Mammary epithelial cell (primary cell): ENCODE measurements at regions of chr2 and their contacts with region 1.

Region 1: GRCh38 chr2:210399440-210400041 is 77.0 kb downstream of the LANCL1 start:
- DNase-seq: peak; percentile 11
- H3K4me3 ChIP-seq: no peak overlapping the region
- H3K27ac ChIP-seq: no peak overlapping the region
- H3K4me1 ChIP-seq: no peaks in the 10 kb centered on the region
- H3K27me3 ChIP-seq: no peaks in the 10 kb centered on the region
- CTCF ChIP-seq: peak; percentile 36 to 48

Region 2: DNA sequence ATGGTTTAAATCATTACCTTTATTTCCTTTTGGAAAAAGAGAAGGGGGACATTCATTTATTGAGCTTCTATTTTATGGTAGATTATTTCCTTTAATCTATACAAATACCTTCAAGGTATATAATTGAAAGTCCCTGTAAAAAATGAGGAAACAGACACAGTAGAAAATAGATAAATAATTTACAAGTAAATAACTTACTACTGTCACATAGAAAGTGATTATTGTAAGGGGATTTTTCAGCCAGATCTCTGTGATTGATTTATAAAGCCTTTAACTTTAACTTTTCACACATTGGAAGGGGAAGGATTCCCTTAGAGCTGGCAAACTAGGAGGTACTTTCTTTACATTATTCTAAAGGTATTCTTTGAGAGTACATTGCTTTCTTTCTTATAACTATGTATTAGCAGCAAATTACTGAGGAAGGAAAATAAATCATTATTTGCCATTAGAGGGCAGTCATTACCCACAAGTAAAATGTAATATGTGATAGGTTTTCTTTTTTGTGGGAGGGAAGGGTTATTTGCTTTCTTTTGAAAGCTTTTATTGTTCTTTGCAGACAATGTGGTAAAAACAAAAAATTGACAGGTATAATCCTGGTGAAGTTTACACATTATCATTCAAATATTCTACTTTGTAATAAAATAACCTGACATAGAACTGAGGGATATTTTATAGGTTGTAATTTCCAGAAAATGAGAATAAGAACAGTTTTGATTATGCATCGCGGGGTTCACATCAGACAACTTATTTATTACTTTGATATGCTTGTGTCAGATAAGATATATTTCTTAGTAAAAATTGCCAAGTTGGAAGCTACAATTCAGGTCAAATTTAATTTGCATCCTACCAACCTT is 421.9 kb before region 1 on chr2:
- CTCF ChIA-PET with region 1: no interaction called
- dilution Hi-C with region 1: no loop called
- in situ Hi-C with region 1: loop called (anchors 25 kb)
- intact Hi-C with region 1: loop called (anchors 5 kb)
- DNase-seq: peak; percentile 9
- H3K4me3 ChIP-seq: no peak overlapping the region
- H3K27ac ChIP-seq: no peak overlapping the region
- H3K4me1 ChIP-seq: no peaks in the 10 kb centered on the region
- H3K27me3 ChIP-seq: no peaks in the 10 kb centered on the region
- CTCF ChIP-seq: peak; percentile 38 to 51

Region 3: GRCh38 chr2:210252699-210253606 is 146.6 kb before region 1 on chr2:
- CTCF ChIA-PET with region 1: no interaction called
- dilution Hi-C with region 1: no loop called
- in situ Hi-C with region 1: loop called (anchors 10 kb)
- intact Hi-C with region 1: loop called (anchors 1 kb)
- DNase-seq: no peak
- H3K4me3 ChIP-seq: no peak overlapping the region
- H3K27ac ChIP-seq: no peak overlapping the region
- H3K4me1 ChIP-seq: no peaks in the 10 kb centered on the region
- H3K27me3 ChIP-seq: no peaks in the 10 kb centered on the region
- CTCF ChIP-seq: no peak

Region 4: DNA sequence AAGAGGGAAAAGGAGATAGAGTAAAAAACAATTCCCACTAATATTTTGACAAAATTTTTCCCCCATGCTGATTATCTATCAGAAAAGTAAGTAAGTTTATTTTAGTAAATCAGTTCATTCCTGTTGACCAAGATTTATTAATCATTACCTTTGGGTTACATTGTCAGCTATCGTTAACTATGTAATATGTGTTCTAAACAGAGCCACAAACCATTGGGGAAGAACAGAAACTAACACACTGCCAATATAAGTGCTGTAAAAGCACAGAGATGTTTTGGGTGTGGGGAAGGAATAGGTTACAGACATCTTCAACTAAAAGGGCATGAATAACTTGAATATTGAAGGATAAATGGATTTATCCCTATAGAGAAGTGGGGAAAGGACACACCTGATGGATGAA is 131.8 kb before region 1 on chr2:
- CTCF ChIA-PET with region 1: no interaction called
- dilution Hi-C with region 1: no loop called
- in situ Hi-C with region 1: loop called in 1 of 2 experiments (anchors 10 kb)
- intact Hi-C with region 1: no loop called
- DNase-seq: no peak
- H3K4me3 ChIP-seq: no peak overlapping the region
- H3K27ac ChIP-seq: no peak overlapping the region
- H3K4me1 ChIP-seq: no peaks in the 10 kb centered on the region
- H3K27me3 ChIP-seq: no peaks in the 10 kb centered on the region
- CTCF ChIP-seq: no peak

Region 5: DNA sequence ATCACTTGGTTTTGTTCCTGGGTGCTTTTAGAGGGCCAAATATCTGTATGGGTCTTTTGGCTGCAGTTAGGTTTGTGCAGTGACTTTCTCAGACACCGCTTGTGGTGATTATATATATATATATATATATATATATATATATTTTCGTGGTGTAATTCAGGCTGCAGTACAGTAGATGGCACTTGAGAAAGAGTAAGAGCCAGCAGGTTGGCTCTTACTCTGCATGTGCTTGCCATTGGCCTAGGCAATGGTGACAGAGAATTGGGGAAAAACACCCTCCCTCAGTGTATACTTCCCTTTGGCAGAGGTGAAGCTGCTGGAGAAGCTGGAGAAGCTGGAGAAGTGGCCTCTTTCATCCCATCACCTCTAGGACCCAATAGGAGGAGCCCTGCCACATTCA is 62.4 kb before region 1 on chr2:
- CTCF ChIA-PET with region 1: no interaction called
- dilution Hi-C with region 1: loop called (anchors 5 kb)
- in situ Hi-C with region 1: no loop called
- intact Hi-C with region 1: no loop called
- DNase-seq: no peak
- H3K4me3 ChIP-seq: no peak overlapping the region
- H3K27ac ChIP-seq: no peak overlapping the region
- H3K4me1 ChIP-seq: no peaks in the 10 kb centered on the region
- H3K27me3 ChIP-seq: no peaks in the 10 kb centered on the region
- CTCF ChIP-seq: peak in 1 of 2 donors; percentile 19

Region 6: DNA sequence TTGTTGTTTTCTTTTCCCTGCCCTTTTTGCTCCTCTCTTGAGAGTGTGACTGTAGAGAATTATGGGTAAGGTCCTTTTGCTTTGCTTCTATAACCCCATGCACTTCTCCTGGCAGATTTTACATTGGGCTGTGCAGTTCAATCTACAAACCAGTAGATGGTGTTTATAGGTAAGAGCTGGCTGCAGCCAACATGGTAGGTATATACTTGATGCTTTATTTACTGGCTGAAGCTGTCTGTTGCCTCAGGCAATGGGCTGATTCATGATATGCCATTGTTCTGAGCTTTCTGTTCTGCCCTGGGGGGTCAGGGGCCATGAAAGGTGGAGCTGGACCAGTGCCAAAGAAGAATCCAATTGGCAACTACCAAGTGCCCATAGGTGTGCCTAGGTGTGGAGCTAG is 36.3 kb before region 1 on chr2:
- CTCF ChIA-PET with region 1: interaction called, 3 read pairs
- dilution Hi-C with region 1: no loop called
- in situ Hi-C with region 1: no loop called
- intact Hi-C with region 1: loop called (anchors 1 kb)
- DNase-seq: peak; percentile 18
- H3K4me3 ChIP-seq: no peak overlapping the region
- H3K27ac ChIP-seq: no peak overlapping the region
- H3K4me1 ChIP-seq: no peaks in the 10 kb centered on the region
- H3K27me3 ChIP-seq: no peaks in the 10 kb centered on the region
- CTCF ChIP-seq: peak; percentile 31 to 62